Activated CD8-positive, alpha-beta T cell treated with anti-CD3 and anti-CD28 coated beads, Interleukin-2, amount 10 ng/mL, durations not matched to agents 7 days and 5 days (primary cell): ENCODE measurements at regions of chr22 and their contacts with region 1.

Region 1: GRCh38 chr22:24555157-24556039 is at the start of gene SNRPD3:
- DNase-seq: peak; percentile 100
- ATAC-seq: peak; percentile 90
- H3K4me3 Mint-ChIP-seq: peak within 1 kb of the TSS; percentile 99
- H3K27ac Mint-ChIP-seq: peak within 1 kb of the TSS; percentile 97
- H3K4me1 Mint-ChIP-seq: peaks cover 52% of the 10 kb centered on the region
- H3K27me3 Mint-ChIP-seq: no peaks in the 10 kb centered on the region
- total RNA-seq, gene SNRPD3: 136 to 144 TPM

Region 2: DNA sequence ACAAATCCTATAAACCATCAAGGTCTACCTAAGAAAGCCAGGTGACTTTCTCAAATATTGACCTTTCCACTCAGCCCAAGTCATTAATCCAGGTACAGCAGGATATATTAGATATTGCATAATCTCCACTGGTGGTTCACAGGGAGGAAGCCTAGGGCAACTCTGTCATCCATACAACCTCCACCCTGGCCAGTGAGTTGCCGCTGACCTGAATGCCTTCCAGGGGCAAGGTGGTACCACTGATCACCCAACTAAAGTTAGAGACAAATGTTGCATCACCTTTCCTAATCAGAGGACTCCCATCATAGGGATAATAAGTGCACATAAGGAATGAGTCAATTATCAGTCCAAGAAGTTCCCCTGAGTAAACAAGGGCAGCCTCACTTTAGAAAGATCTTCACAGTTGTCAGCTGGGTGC is 23.3 kb before region 1 on chr22:
- CTCF ChIA-PET with region 1: interaction called, 4 read pairs
- POLR2A ChIA-PET with region 1: interaction called, 10 read pairs
- DNase-seq: no peak
- ATAC-seq: no peak
- H3K4me3 Mint-ChIP-seq: no peak overlapping the region
- H3K27ac Mint-ChIP-seq: no peak overlapping the region
- H3K4me1 Mint-ChIP-seq: no peaks in the 10 kb centered on the region
- H3K27me3 Mint-ChIP-seq: peaks cover 2% of the 10 kb centered on the region